ENCODE measurements at regions of chr5 and their contacts with region 1.

Region 1: GRCh38 chr5:119340597-119341218 is 15.1 kb upstream of the TNFAIP8 start:
- DNase-seq: peak; percentile 83
- ATAC-seq: peak; percentile 38
- H3K4me3 Mint-ChIP-seq: peak overlapping the region; percentile 73
- H3K27ac Mint-ChIP-seq: peak overlapping the region; percentile 95
- H3K4me1 Mint-ChIP-seq: peaks cover 94% of the 10 kb centered on the region
- H3K27me3 Mint-ChIP-seq: no peaks in the 10 kb centered on the region
- CTCF ChIP-seq: no peak

Region 2: DNA sequence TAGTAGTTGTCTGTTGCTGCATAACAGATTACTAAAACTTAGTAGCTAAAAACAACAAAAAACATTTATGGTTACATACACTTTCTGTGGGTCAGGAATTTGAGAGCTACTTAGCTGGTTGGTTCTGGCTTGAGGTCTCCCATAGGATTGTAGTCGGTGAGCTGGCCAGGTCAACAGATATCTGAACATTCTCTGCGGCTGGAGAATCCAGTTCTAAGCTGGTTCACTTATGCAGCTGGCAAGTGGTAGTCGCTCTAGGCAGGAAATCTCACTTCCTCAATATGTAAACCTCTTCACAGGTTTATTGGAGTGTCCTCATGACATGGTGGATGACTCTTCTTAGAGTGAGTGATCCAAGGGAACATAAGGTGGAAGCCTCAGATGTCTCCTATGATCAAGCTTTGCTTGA is 50.5 kb before region 1 on chr5:
- CTCF ChIA-PET with region 1: interaction called, 8 read pairs
- POLR2A ChIA-PET with region 1: interaction called, 4 read pairs
- intact Hi-C with region 1: loop called (anchors 5 kb)
- DNase-seq: peak; percentile 26
- ATAC-seq: peak; percentile 59
- H3K4me3 Mint-ChIP-seq: peak overlapping the region; percentile 22
- H3K27ac Mint-ChIP-seq: peak overlapping the region; percentile 93
- H3K4me1 Mint-ChIP-seq: peaks cover 85% of the 10 kb centered on the region
- H3K27me3 Mint-ChIP-seq: no peaks in the 10 kb centered on the region
- CTCF ChIP-seq: no peak

Region 3: GRCh38 chr5:119315516-119315949 is 25.2 kb before region 1 on chr5:
- CTCF ChIA-PET with region 1: interaction called, 42 read pairs
- POLR2A ChIA-PET with region 1: interaction called, 13 read pairs
- intact Hi-C with region 1: no loop called
- DNase-seq: peak; percentile 84
- ATAC-seq: peak; percentile 79
- H3K4me3 Mint-ChIP-seq: peak overlapping the region; percentile 38
- H3K27ac Mint-ChIP-seq: peak overlapping the region; percentile 81
- H3K4me1 Mint-ChIP-seq: peaks cover 93% of the 10 kb centered on the region
- H3K27me3 Mint-ChIP-seq: no peaks in the 10 kb centered on the region
- CTCF ChIP-seq: peak; percentile 70

Region 4: DNA sequence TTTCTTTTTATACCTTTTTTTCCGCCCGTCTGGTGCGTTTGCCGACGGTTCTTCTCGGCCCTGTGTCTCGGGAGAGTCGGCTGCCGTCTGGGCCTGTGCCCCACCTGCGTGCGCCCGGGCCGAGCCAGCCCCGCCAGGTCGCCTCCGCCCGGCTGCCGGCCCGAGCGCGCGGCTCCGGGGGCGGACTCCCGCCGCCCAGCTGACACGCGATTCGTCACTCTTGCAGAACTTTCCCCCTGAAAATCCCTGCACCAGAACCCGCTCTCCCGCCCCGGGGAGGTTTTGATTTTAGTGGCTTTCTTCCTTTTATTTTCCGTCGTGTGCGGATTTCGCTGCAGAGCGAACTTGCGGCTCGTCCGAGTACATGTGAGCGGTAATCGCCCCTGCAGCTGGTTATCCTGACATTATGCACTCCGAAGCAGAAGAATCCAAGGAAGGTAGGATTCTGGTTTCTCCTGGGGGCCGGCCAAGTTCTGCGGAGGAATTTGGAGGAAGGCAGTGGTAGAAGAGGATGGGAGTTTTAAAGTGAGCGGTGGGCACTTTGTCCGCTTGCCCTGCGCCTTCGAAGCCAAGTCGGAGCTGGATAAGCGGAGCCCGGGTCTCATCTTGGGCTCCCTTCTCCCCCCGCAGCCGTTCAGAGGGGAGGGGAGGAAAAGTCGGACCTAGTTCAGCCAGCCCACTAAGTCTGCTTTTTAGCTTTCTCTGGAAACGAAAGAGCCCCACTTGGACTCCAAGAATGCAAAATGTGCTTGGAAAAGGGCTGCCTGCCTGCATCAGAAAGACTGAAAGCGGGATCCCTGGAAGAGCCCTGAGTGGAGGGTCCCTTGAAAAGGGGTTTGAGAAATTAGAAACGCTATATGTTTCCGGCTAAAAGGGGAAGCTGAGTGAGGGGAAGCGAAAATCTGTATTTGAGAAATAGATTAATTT is 15.2 kb after region 1 on chr5 and contains the start of gene TNFAIP8:
- CTCF ChIA-PET with region 1: interaction called, 32 read pairs
- POLR2A ChIA-PET with region 1: interaction called, 163 read pairs
- intact Hi-C with region 1: no loop called
- DNase-seq: peak; percentile 85
- ATAC-seq: peak; percentile 63
- H3K4me3 Mint-ChIP-seq: peak within 1 kb of the TSS; percentile 98
- H3K27ac Mint-ChIP-seq: peak within 1 kb of the TSS; percentile 97
- H3K4me1 Mint-ChIP-seq: peaks cover 62% of the 10 kb centered on the region
- H3K27me3 Mint-ChIP-seq: no peaks in the 10 kb centered on the region
- CTCF ChIP-seq: no peak
- total RNA-seq, gene TNFAIP8: 135 to 141 TPM

Region 5: DNA sequence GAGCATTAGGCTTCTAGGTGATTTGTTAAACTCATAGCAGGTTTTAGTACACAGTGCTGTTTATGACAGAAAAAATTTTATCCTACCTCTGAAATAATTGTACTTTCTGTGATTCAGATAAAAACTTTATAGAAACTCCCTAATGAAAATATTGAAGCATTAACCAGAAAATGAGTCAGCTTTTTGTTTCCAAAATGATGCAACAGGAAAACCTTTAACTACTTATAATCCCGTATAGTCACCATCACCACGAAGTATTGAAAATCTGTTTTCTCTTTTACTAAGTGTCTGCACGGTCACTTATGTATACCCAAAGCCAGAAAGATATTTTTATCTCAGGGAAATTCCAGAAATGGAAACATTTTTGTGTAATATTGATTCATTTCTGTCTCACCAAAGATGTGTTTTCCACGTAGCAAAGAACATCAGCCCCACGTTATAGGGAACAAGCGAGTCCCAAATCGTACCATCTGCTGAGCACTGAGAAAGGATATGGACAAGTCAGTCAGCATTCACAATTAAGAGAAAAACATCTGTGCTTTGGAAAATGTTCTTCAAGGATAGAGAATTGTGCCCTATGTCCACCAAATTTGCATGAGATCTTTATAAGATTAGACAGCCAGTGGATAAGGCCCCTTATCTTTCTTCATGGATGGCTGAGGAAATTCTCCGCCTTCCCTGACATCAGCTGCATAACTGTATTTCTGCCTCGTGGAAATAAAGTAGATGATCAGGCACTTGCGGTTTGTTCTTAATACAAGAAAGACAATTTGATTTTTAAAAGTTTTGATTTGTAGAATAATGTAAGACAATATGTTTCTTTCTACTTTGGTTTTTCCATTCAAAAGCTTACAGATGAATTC is 57.0 kb after region 1 on chr5:
- CTCF ChIA-PET with region 1: interaction called, 4 read pairs
- POLR2A ChIA-PET with region 1: interaction called, 3 read pairs
- intact Hi-C with region 1: loop called (anchors 5 kb)
- DNase-seq: peak; percentile 44
- ATAC-seq: peak; percentile 72
- H3K4me3 Mint-ChIP-seq: peak overlapping the region; percentile 56
- H3K27ac Mint-ChIP-seq: peak overlapping the region; percentile 98
- H3K4me1 Mint-ChIP-seq: peaks cover 80% of the 10 kb centered on the region
- H3K27me3 Mint-ChIP-seq: no peaks in the 10 kb centered on the region
- CTCF ChIP-seq: no peak

Region 6: DNA sequence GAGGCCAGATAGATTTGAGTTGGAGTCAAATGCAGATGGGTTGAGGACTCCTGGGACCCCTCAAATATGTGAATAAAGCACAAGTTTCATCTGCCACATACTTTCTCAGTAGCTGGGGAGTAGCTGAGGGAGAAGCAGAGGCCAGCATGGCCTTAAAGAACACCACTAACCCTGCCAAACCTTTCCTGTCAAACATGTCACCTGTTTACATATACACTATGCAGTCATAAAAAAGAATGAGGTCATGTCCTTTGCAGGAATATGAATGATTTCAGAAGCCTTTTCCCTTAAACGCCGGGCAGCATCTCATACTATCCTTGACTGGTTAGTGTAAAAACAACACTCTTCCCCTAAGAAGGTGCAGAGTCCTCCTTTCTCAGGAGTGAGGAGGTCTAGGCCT is 86.4 kb after region 1 on chr5:
- CTCF ChIA-PET with region 1: no interaction called
- POLR2A ChIA-PET with region 1: no interaction called
- intact Hi-C with region 1: no loop called
- DNase-seq: no peak
- ATAC-seq: no peak
- H3K4me3 Mint-ChIP-seq: no peak overlapping the region
- H3K27ac Mint-ChIP-seq: no peak overlapping the region
- H3K4me1 Mint-ChIP-seq: no peaks in the 10 kb centered on the region
- H3K27me3 Mint-ChIP-seq: no peaks in the 10 kb centered on the region
- CTCF ChIP-seq: no peak

Measured in activated CD8-positive, alpha-beta T cell treated with anti-CD3 and anti-CD28 coated beads for 36 hours (primary cell).